SK-N-SH (cell line): ENCODE measurements at regions of chr14 and their contacts with region 1.

Region 1: DNA sequence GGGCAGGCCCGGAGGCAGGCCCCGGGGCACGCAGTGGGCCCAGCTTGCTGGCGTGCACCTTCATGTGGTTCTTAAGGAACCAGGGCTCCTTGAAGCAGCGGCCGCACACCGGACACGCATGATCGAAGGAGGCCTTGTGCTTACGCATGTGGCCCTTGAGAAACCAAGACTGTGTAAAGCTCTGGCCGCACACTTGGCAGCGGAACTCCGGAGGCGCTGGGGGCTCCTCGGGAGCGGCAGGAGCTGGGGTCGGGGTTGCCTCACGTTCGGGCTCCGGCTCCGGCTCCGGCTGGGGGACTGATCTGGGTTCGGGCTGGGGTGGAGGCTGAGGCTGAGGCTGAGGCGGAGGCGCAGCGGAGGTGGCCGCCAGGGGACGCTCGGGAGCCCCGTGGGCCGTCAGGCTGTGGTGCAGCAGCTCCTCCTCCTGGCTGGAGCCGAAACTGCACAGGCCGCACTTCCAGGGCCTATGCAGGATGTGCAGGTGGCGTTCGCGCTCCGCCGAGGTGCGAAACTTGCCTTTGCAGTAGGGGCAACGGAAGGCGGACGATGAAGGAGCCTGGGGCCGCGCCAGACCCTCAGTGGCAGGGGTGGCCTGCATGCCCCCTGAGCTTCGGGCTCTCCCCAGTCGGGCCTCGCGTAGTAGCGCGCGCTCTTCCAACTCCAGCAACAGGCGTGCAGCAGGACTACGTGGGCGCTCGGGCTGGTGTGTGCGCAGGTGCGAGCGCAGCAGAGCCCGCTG is 6.0 kb downstream of the ZNF219 start:
- DNase-seq: peak; percentile 95
- H3K4me3 ChIP-seq: peak overlapping the region in 1 of 2 experiments; percentile 36; a peak in 1 of 4 replicates
- H3K27ac ChIP-seq: no peak overlapping the region; a peak in 1 of 4 replicates
- H3K4me1 ChIP-seq: peaks cover 21 to 28% of the 10 kb centered on the region in 2 experiments
- H3K27me3 ChIP-seq: no peaks in the 10 kb centered on the region
- CTCF ChIP-seq: peak; percentile 97
- EP300 ChIP-seq: no peak
- RAD21 ChIP-seq: peak; percentile 92

Region 2: GRCh38 chr14:20970983-20971704 is 121.3 kb before region 1 on chr14:
- CTCF ChIA-PET with region 1: interaction called, 11 read pairs
- POLR2A ChIA-PET with region 1: no interaction called
- DNase-seq: peak; percentile 87
- H3K4me3 ChIP-seq: peak overlapping the region; percentile 59 to 68
- H3K27ac ChIP-seq: peak overlapping the region in 1 of 2 experiments; percentile 36; a peak in 1 of 4 replicates
- H3K4me1 ChIP-seq: peaks cover 0 to 3% of the 10 kb centered on the region in 2 experiments; a peak in 1 of 4 replicates
- H3K27me3 ChIP-seq: peaks cover 9% of the 10 kb centered on the region; the same call in 1 of the 2 replicates
- CTCF ChIP-seq: peak; percentile 91
- EP300 ChIP-seq: no peak
- RAD21 ChIP-seq: peak; percentile 62

Region 3: DNA sequence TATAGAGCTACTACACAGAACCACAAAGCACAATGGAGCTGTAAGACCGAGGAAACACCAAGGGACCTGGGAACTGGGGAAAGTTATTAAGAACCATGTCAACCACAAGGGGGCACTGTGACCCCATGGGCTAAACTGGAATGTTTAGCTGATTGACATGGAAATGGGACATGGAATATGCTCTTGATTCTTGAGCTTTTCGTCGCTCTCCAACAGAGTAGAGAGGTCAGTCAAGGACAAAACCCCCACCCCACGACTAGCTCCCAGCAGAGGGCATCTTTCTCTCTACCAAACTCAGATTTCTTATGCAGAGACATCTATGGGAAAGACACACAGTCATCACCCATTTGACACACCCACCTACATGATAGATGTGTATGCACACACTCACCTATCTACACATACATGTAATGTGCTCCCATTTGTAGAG is 77.7 kb before region 1 on chr14:
- CTCF ChIA-PET with region 1: interaction called, 555 read pairs
- POLR2A ChIA-PET with region 1: interaction called, 3 read pairs
- DNase-seq: peak; percentile 75
- H3K4me3 ChIP-seq: no peak overlapping the region; a peak in 1 of 4 replicates
- H3K27ac ChIP-seq: no peak overlapping the region
- H3K4me1 ChIP-seq: no peaks in the 10 kb centered on the region; a peak in 1 of 4 replicates
- H3K27me3 ChIP-seq: peaks cover 15% of the 10 kb centered on the region
- CTCF ChIP-seq: peak; percentile 89
- EP300 ChIP-seq: no peak
- RAD21 ChIP-seq: peak; percentile 96

Region 4: GRCh38 chr14:21049271-21049673 is 43.2 kb before region 1 on chr14:
- CTCF ChIA-PET with region 1: interaction called, 13 read pairs
- POLR2A ChIA-PET with region 1: no interaction called
- DNase-seq: no peak
- H3K4me3 ChIP-seq: no peak overlapping the region
- H3K27ac ChIP-seq: no peak overlapping the region
- H3K4me1 ChIP-seq: peaks cover 0 to 4% of the 10 kb centered on the region in 2 experiments; a peak in 1 of 4 replicates
- H3K27me3 ChIP-seq: no peaks in the 10 kb centered on the region
- CTCF ChIP-seq: no peak
- EP300 ChIP-seq: no peak
- RAD21 ChIP-seq: no peak

Region 5: GRCh38 chr14:21071225-21072030 is 21.0 kb before region 1 on chr14:
- CTCF ChIA-PET with region 1: interaction called, 296 read pairs
- POLR2A ChIA-PET with region 1: interaction called, 19 read pairs
- DNase-seq: peak; percentile 95
- H3K4me3 ChIP-seq: peak overlapping the region; percentile 81 to 89
- H3K27ac ChIP-seq: peak overlapping the region; percentile 98 to 99
- H3K4me1 ChIP-seq: peaks cover 22 to 37% of the 10 kb centered on the region in 2 experiments
- H3K27me3 ChIP-seq: no peaks in the 10 kb centered on the region
- CTCF ChIP-seq: no peak
- EP300 ChIP-seq: peak in 1 of 2 experiments; percentile 25; a peak in 1 of 4 replicates
- RAD21 ChIP-seq: 0 out of 2 replicates have a peak, but pooled peaks have one; percentile 2

Region 6: GRCh38 chr14:21109377-21110260 is 17.2 kb after region 1 on chr14:
- CTCF ChIA-PET with region 1: interaction called, 283 read pairs
- POLR2A ChIA-PET with region 1: interaction called, 12 read pairs
- DNase-seq: no peak
- H3K4me3 ChIP-seq: no peak overlapping the region
- H3K27ac ChIP-seq: no peak overlapping the region
- H3K4me1 ChIP-seq: peaks cover 5 to 18% of the 10 kb centered on the region in 2 experiments; a peak in 3 of 4 replicates
- H3K27me3 ChIP-seq: no peaks in the 10 kb centered on the region
- CTCF ChIP-seq: no peak
- EP300 ChIP-seq: no peak
- RAD21 ChIP-seq: no peak

Region 7: GRCh38 chr14:21334202-21334899 is 241.9 kb after region 1 on chr14:
- CTCF ChIA-PET with region 1: no interaction called
- POLR2A ChIA-PET with region 1: no interaction called
- DNase-seq: no peak
- H3K4me3 ChIP-seq: no peak overlapping the region
- H3K27ac ChIP-seq: no peak overlapping the region
- H3K4me1 ChIP-seq: no peaks in the 10 kb centered on the region
- H3K27me3 ChIP-seq: no peaks in the 10 kb centered on the region
- CTCF ChIP-seq: no peak
- EP300 ChIP-seq: no peak
- RAD21 ChIP-seq: no peak

Region 8: DNA sequence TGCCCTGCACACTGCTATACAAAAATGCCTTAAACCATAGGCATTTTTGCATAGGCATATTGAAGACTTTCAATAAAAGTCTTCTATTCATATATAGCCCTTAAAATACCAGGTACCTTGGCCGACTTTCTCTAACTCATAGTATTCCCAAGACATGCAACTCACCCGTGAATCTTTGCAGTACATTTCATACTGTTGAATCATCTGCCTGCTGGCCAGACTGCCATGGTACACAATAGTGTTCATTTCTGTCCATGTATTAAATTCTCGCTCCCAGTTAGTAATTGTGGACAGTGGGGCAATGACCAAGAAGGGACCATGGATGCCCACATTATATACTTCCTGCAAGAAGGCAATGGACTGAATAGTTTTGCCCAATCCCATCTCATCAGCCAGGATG is 315.7 kb after region 1 on chr14:
- CTCF ChIA-PET with region 1: no interaction called
- POLR2A ChIA-PET with region 1: no interaction called
- DNase-seq: no peak
- H3K4me3 ChIP-seq: no peak overlapping the region
- H3K27ac ChIP-seq: peak overlapping the region in 1 of 2 experiments; percentile 60; a peak in 2 of 4 replicates
- H3K4me1 ChIP-seq: 0 out of 4 replicates have a peak, but pooled peaks cover 0 to 8% of the 10 kb centered on the region in 2 experiments
- H3K27me3 ChIP-seq: no peaks in the 10 kb centered on the region
- CTCF ChIP-seq: no peak
- EP300 ChIP-seq: no peak
- RAD21 ChIP-seq: no peak